Mammary epithelial cell (primary cell): ENCODE measurements at regions of chr1 and their contacts with region 1.

Region 1: GRCh38 chr1:20174937-20175666 is 10.8 kb upstream of the UBXN10 start:
- DNase-seq: no peak
- H3K4me3 ChIP-seq: no peak overlapping the region
- H3K27ac ChIP-seq: no peak overlapping the region
- H3K4me1 ChIP-seq: peaks cover 11% of the 10 kb centered on the region
- H3K27me3 ChIP-seq: no peaks in the 10 kb centered on the region
- CTCF ChIP-seq: no peak

Region 2: DNA sequence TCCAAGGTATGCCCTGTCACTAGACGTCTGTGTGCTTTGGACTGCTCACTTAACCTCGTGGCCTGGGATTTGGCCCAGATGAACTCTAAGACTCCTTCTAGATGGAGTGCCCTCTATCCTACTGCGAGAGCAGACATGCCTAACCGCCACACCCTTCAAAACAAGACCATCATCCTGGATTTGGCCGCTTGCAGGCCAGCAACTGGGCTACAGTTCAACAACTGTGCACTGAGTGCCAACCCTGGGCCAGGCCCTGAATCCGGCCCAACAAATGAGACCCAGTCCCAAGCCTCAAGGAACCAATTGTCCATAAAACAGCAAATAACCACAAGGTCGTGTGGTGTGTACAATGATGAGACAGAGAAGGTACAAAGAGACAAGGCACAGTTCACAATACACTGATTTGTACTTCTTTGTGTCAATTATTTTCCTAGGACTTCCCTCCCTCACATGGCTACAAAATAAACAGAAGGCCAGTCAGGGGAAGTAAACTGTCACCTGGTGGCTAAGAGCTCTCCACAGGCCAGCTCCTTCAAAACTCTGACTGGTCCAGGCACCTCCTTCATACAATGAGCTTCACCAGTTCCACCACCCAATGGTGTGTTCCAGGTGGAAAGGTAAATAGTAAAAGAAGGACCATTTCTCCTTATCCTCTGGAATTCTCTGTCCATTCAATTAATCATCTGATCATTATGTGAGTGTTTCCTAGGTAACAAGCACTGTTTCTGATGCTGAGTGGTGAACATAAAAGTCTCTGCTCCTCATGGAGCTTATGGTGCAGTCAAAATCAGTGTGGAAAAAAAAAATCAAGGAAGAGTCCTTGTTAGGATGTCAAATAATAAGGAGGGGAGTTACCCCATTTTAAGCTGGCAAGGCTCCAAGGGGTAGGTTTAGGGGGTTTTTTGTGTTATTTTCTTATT is 750.2 kb before region 1 on chr1:
- CTCF ChIA-PET with region 1: no interaction called
- dilution Hi-C with region 1: no loop called
- in situ Hi-C with region 1: no loop called
- intact Hi-C with region 1: no loop called
- DNase-seq: no peak
- H3K4me3 ChIP-seq: no peak overlapping the region
- H3K27ac ChIP-seq: peak overlapping the region; percentile 9
- H3K4me1 ChIP-seq: peaks cover 23% of the 10 kb centered on the region
- H3K27me3 ChIP-seq: no peaks in the 10 kb centered on the region
- CTCF ChIP-seq: no peak

Region 3: GRCh38 chr1:20207419-20207959 is 32.4 kb after region 1 on chr1:
- CTCF ChIA-PET with region 1: no interaction called
- dilution Hi-C with region 1: loop called (anchors 5 kb)
- in situ Hi-C with region 1: no loop called
- intact Hi-C with region 1: no loop called
- DNase-seq: peak; percentile 69
- H3K4me3 ChIP-seq: no peak overlapping the region
- H3K27ac ChIP-seq: no peak overlapping the region
- H3K4me1 ChIP-seq: peaks cover 29% of the 10 kb centered on the region
- H3K27me3 ChIP-seq: no peaks in the 10 kb centered on the region
- CTCF ChIP-seq: no peak